Upper lobe of right lung (tissue), 1 donor: ENCODE measurements at regions of chr6 and their contacts with region 1.

Region 1: GRCh38 chr6:111657146-111657545 is 51.5 kb upstream of the TRAF3IP2 start:
- DNase-seq: no peak
- ATAC-seq: peak; percentile 33
- H3K4me3 ChIP-seq: no peak overlapping the region
- H3K27ac ChIP-seq: peak overlapping the region; percentile 36
- H3K4me1 ChIP-seq: peaks cover 7% of the 10 kb centered on the region
- H3K27me3 ChIP-seq: no peaks in the 10 kb centered on the region
- CTCF ChIP-seq: no peak

Region 2: DNA sequence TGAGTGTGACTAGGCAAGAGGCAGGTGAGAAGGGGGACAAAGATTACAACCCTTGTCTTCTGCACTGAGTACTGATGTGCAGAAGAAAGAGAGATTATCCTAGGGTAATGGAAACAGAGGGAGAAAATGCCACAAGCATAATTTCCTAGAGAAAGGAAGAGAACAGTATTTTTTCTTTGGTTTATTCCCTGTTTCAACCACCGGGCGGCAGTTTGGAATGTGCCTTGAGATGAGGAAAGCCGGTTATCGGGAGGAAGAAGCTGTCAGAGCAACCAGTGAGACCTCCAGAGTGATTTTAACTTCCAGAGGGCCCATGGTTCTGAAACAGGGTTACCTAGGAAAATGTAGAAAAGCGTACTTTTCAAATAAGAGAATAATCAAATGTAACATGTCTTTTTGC is 295.5 kb before region 1 on chr6:
- intact Hi-C with region 1: loop called (anchors 10 kb)
- DNase-seq: no peak
- ATAC-seq: peak; percentile 54
- H3K4me3 ChIP-seq: no peak overlapping the region
- H3K27ac ChIP-seq: no peak overlapping the region
- H3K4me1 ChIP-seq: no peaks in the 10 kb centered on the region
- H3K27me3 ChIP-seq: no peaks in the 10 kb centered on the region
- CTCF ChIP-seq: peak; percentile 42

Region 3: GRCh38 chr6:111565326-111566221 is 91.6 kb before region 1 on chr6:
- intact Hi-C with region 1: no loop called
- DNase-seq: no peak
- ATAC-seq: peak; percentile 24
- H3K4me3 ChIP-seq: no peak overlapping the region
- H3K27ac ChIP-seq: no peak overlapping the region
- H3K4me1 ChIP-seq: peaks cover 42% of the 10 kb centered on the region
- H3K27me3 ChIP-seq: no peaks in the 10 kb centered on the region
- CTCF ChIP-seq: no peak

Region 4: GRCh38 chr6:111985202-111985731 is 328.1 kb after region 1 on chr6:
- intact Hi-C with region 1: no loop called
- DNase-seq: no peak
- ATAC-seq: peak; percentile 88
- H3K4me3 ChIP-seq: no peak overlapping the region
- H3K27ac ChIP-seq: peak overlapping the region; percentile 39
- H3K4me1 ChIP-seq: peaks cover 3% of the 10 kb centered on the region
- H3K27me3 ChIP-seq: no peaks in the 10 kb centered on the region
- CTCF ChIP-seq: no peak